Left cardiac atrium (tissue), 4 donors: ENCODE measurements at regions of chrX and their contacts with region 1.

Region 1: DNA sequence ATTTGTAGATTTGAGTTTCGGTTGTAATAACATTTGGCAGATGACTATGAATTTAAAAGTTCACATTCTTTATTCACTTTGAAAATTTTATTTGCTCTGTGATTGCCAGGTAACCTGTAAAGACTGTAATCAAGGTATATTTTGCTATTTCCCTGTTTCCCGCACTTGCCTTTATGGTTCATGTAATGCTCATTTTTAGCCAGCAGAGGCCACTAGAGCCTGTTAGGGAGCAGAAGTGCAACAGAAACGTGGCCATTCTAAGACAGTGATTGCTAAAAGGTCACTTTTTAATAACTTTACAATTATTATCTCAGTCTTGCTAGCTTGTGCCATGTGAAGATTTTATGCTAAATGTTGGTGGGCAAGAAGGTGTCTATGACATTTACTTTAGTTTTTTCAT is 12.4 kb downstream of the YIPF6 start:
- DNase-seq: no peak
- ATAC-seq: no peak

Region 2: DNA sequence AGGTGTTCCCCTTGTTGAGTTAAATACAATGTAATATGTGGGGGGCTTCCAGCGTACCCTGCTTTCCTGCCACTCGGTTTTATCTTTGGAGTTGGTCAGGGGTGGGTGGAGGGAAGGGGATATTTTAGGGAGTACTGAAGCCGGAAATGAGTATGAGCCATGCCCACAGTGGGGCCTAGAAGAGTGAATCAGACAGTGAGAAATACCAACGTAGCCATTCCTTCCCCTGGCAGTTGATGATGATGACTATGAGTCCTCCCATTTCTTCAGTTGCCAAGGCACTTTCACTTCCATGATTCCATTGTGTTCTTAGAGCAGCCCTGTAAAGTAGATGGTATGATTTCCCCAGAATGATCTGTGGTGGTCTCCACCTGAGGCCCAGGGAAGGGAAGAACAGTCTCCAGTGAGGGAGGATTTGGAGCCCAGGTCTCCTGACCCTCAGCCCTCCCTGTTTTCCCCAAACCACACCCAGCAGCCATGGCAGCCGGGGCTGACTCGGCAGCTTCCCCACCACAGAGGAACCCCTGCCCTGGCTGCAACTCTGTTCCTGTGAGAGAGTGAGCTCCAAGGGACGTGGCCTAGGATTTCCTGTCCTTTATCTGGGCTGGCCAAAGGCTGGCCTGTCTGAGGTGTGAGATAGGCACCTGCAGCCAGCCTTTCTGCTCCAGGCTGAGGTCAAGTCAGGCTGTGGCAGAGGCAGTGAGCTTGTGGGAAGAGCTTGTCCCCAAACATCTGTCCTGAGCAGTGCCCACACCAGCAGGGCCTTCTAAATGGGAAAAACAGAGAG is 188.9 kb after region 1 on chrX:
- intact Hi-C with region 1: loop called in 1 of 2 experiments (anchors 10 kb)
- DNase-seq: peak; percentile 54
- ATAC-seq: peak; percentile 42 to 65

Region 3: GRCh38 chrX:68710870-68711576 is 199.8 kb after region 1 on chrX:
- intact Hi-C with region 1: loop called (anchors 5 to 10 kb)
- DNase-seq: peak; percentile 32
- ATAC-seq: peak; percentile 78 to 79

Region 4: GRCh38 chrX:68743754-68744153 is 232.5 kb after region 1 on chrX:
- intact Hi-C with region 1: no loop called
- DNase-seq: no peak
- ATAC-seq: no peak

Region 5: DNA sequence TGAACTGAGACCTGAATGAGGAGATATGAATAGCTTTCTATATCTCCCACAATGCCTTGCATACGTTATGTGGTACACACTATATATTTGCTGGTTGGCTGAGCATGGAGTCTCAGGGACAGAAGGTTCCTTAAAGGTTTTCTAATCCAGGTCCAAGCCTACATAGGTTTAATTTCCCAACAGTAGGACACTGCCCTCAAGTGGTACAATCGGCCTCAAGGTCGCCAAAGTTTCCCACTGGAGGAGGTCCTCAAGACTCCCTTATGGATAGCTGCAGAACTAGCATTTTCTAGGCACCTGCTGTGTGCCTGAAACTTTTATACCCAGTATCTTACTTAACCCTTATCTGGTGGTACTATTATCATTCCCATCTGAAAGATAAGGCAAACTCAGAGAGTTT is 296.6 kb after region 1 on chrX:
- intact Hi-C with region 1: loop called in 1 of 2 experiments (anchors 5 kb)
- DNase-seq: no peak
- ATAC-seq: peak; percentile 47 to 53